ENCODE measurements at regions of chr6 and their contacts with region 1.

Region 1: DNA sequence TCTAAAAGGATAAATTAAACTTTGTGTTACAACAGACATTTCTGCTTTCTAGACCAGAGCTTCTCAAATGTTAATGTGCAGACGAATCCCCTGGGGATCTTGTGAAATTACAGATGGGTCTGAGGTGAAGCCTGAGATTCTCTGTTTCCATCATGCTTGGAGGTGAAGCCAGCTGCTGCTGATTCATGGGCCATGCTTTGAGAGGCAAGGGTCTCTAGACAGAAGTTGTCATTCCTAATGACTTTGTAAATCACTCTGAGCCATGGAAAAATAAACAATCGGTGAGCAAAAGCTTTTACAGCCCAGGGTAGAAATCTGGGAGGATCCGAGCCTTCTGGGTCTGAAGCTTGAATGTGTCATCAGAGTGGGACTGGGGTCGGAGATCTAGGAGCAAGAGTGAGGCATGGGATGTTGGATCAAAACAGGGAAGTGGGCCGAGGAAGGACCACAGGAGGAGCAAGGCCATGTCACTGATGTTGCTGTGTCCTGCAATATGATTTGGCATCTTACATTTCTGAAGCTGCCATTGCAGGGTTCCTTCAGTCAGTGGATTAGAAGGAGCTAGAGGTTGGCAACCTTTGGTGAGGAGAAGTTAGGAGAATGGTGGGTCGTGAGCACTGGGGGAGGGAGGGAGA is 77.3 kb downstream of the TRMT11 start:
- DNase-seq: no peak
- ATAC-seq: no peak
- H3K4me3 ChIP-seq: no peak overlapping the region
- H3K27ac ChIP-seq: no peak overlapping the region
- H3K4me1 ChIP-seq: peaks cover 18 to 23% of the 10 kb centered on the region in 2 experiments
- H3K27me3 ChIP-seq: no peaks in the 10 kb centered on the region
- CTCF ChIP-seq: no peak
- EP300 ChIP-seq: no peak
- POLR2A ChIP-seq: no peak
- RAD21 ChIP-seq: no peak

Region 2: GRCh38 chr6:126075335-126076071 is 11.9 kb after region 1 on chr6:
- CTCF ChIA-PET with region 1: no interaction called
- POLR2A ChIA-PET with region 1: interaction called, 3 read pairs
- in situ Hi-C with region 1: no loop called
- intact Hi-C with region 1: loop called (anchors 1 kb)
- DNase-seq: peak in 2 of 4 experiments; percentile 49 to 59
- ATAC-seq: peak; percentile 73
- H3K4me3 ChIP-seq: no peak overlapping the region
- H3K27ac ChIP-seq: peak overlapping the region; percentile 50; the same call in 2 of the 3 replicates
- H3K4me1 ChIP-seq: peaks cover 0 to 18% of the 10 kb centered on the region in 2 experiments; a peak in 4 of 5 replicates
- H3K27me3 ChIP-seq: no peaks in the 10 kb centered on the region
- CTCF ChIP-seq: no peak
- EP300 ChIP-seq: no peak
- POLR2A ChIP-seq: no peak
- RAD21 ChIP-seq: no peak

Region 3: DNA sequence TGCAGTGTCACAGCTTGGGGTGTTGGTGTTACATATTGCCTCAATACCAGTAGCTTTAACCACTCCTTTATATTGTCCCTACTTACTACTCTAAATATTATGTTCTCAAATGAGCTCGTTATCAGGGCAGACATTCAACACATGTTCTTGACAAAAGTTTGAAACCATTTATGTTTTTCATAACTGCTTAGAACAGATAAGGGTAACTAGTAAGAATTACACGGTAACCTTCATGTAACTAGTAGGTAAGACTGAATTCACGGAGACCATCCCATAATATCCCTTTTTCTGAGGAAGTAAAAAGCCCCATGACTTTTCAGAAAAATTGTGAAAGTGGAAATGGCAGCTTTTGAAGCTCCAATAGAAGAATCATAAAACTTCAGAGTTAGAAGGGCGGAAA is 216.7 kb after region 1 on chr6:
- CTCF ChIA-PET with region 1: no interaction called
- POLR2A ChIA-PET with region 1: no interaction called
- in situ Hi-C with region 1: no loop called
- intact Hi-C with region 1: no loop called
- DNase-seq: peak in 1 of 4 experiments; percentile 4
- ATAC-seq: no peak
- H3K4me3 ChIP-seq: no peak overlapping the region
- H3K27ac ChIP-seq: no peak overlapping the region
- H3K4me1 ChIP-seq: no peaks in the 10 kb centered on the region
- H3K27me3 ChIP-seq: no peaks in the 10 kb centered on the region
- CTCF ChIP-seq: no peak
- EP300 ChIP-seq: no peak
- POLR2A ChIP-seq: no peak
- RAD21 ChIP-seq: no peak

Measured in K562 (cell line).